ENCODE measurements at regions of chr20 and their contacts with region 1.

Region 1: GRCh38 chr20:17431621-17432364 is 99.4 kb downstream of the BFSP1 start:
- DNase-seq: peak; percentile 33
- H3K4me3 ChIP-seq: no peak overlapping the region
- H3K27ac ChIP-seq: no peak overlapping the region
- H3K4me1 ChIP-seq: no peaks in the 10 kb centered on the region
- H3K27me3 ChIP-seq: peaks cover 0 to 4% of the 10 kb centered on the region in 2 experiments
- CTCF ChIP-seq: peak; percentile 80 to 82
- POLR2A ChIP-seq: no peak

Region 2: GRCh38 chr20:16801919-16802911 is 629.6 kb before region 1 on chr20:
- CTCF ChIA-PET with region 1: interaction called, 364 read pairs
- POLR2A ChIA-PET with region 1: no interaction called
- dilution Hi-C with region 1: loop called (anchors 25 kb)
- intact Hi-C with region 1: loop called (anchors 1 kb)
- DNase-seq: peak; percentile 61
- H3K4me3 ChIP-seq: no peak overlapping the region
- H3K27ac ChIP-seq: no peak overlapping the region
- H3K4me1 ChIP-seq: no peaks in the 10 kb centered on the region
- H3K27me3 ChIP-seq: peaks cover 3 to 9% of the 10 kb centered on the region in 2 experiments
- CTCF ChIP-seq: peak; percentile 68 to 76
- POLR2A ChIP-seq: no peak

Region 3: GRCh38 chr20:16821211-16822089 is 610.3 kb before region 1 on chr20:
- CTCF ChIA-PET with region 1: interaction called, 27 read pairs
- POLR2A ChIA-PET with region 1: no interaction called
- dilution Hi-C with region 1: loop called (anchors 25 kb)
- intact Hi-C with region 1: no loop called
- DNase-seq: peak; percentile 39
- H3K4me3 ChIP-seq: no peak overlapping the region
- H3K27ac ChIP-seq: no peak overlapping the region
- H3K4me1 ChIP-seq: no peaks in the 10 kb centered on the region
- H3K27me3 ChIP-seq: no peaks in the 10 kb centered on the region
- CTCF ChIP-seq: peak; percentile 90 to 92
- POLR2A ChIP-seq: no peak

Region 4: GRCh38 chr20:17377231-17377630 is 54.6 kb before region 1 on chr20:
- CTCF ChIA-PET with region 1: interaction called, 3 read pairs
- POLR2A ChIA-PET with region 1: no interaction called
- dilution Hi-C with region 1: no loop called
- intact Hi-C with region 1: loop called (anchors 10 kb)
- DNase-seq: no peak
- H3K4me3 ChIP-seq: no peak overlapping the region
- H3K27ac ChIP-seq: no peak overlapping the region
- H3K4me1 ChIP-seq: no peaks in the 10 kb centered on the region
- H3K27me3 ChIP-seq: no peaks in the 10 kb centered on the region
- CTCF ChIP-seq: no peak
- POLR2A ChIP-seq: no peak

Region 5: DNA sequence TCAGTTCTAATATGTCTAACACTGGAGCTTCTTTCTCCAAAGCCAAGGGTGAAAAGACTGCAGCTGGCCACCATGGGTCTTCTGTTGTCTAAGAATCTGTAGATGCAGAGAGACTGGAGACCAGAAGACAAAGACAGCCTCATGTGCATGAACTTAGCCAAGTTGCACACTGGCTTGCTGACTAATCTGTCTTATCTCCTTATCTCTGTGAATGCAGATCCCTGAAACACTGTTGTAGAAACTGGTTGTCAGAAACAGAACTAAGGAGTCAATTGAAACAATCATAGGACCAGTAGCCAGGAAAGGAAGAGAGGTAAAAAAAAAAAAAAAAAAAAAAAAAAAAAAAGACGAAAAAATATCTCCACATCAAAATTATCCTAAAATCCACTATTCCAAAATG is 10.3 kb before region 1 on chr20:
- CTCF ChIA-PET with region 1: interaction called, 26 read pairs
- POLR2A ChIA-PET with region 1: no interaction called
- dilution Hi-C with region 1: no loop called
- intact Hi-C with region 1: no loop called
- DNase-seq: no peak
- H3K4me3 ChIP-seq: no peak overlapping the region
- H3K27ac ChIP-seq: no peak overlapping the region
- H3K4me1 ChIP-seq: no peaks in the 10 kb centered on the region
- H3K27me3 ChIP-seq: peaks cover 0 to 2% of the 10 kb centered on the region in 2 experiments
- CTCF ChIP-seq: no peak
- POLR2A ChIP-seq: no peak

Region 6: DNA sequence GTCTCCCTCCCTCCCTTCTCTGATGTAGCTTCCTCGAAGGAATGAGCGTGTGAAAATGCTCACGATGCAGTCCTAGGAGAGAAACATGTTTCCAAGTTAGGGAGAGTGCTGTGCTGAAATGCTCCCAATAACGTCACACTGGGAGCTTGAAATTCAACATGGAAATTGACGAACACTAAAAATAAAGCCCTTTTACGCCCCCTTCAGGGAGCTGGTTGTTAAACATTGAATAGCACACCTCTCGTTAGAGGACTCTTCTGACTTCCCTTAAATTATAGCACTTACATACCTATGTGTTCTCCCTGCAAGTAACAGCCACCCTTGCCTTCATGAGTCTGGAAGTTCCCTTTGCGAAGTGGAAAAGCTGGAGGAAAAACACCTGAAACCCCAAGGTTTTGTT is 10.8 kb after region 1 on chr20:
- CTCF ChIA-PET with region 1: interaction called, 20 read pairs
- POLR2A ChIA-PET with region 1: no interaction called
- dilution Hi-C with region 1: no loop called
- intact Hi-C with region 1: no loop called
- DNase-seq: no peak
- H3K4me3 ChIP-seq: no peak overlapping the region
- H3K27ac ChIP-seq: no peak overlapping the region
- H3K4me1 ChIP-seq: no peaks in the 10 kb centered on the region
- H3K27me3 ChIP-seq: peaks cover 0 to 3% of the 10 kb centered on the region in 2 experiments
- CTCF ChIP-seq: peak in 1 of 2 donors; percentile 6
- POLR2A ChIP-seq: no peak

Region 7: GRCh38 chr20:17449031-17449430 is 17.2 kb after region 1 on chr20:
- CTCF ChIA-PET with region 1: interaction called, 17 read pairs
- POLR2A ChIA-PET with region 1: no interaction called
- dilution Hi-C with region 1: no loop called
- intact Hi-C with region 1: no loop called
- DNase-seq: no peak
- H3K4me3 ChIP-seq: no peak overlapping the region
- H3K27ac ChIP-seq: no peak overlapping the region
- H3K4me1 ChIP-seq: no peaks in the 10 kb centered on the region
- H3K27me3 ChIP-seq: peaks cover 0 to 5% of the 10 kb centered on the region in 2 experiments
- CTCF ChIP-seq: no peak
- POLR2A ChIP-seq: no peak

Measured in endothelial cell of umbilical vein (primary cell).